KBM-7 (cell line): ENCODE measurements at regions of chr6 and their contacts with region 1.

Region 1: DNA sequence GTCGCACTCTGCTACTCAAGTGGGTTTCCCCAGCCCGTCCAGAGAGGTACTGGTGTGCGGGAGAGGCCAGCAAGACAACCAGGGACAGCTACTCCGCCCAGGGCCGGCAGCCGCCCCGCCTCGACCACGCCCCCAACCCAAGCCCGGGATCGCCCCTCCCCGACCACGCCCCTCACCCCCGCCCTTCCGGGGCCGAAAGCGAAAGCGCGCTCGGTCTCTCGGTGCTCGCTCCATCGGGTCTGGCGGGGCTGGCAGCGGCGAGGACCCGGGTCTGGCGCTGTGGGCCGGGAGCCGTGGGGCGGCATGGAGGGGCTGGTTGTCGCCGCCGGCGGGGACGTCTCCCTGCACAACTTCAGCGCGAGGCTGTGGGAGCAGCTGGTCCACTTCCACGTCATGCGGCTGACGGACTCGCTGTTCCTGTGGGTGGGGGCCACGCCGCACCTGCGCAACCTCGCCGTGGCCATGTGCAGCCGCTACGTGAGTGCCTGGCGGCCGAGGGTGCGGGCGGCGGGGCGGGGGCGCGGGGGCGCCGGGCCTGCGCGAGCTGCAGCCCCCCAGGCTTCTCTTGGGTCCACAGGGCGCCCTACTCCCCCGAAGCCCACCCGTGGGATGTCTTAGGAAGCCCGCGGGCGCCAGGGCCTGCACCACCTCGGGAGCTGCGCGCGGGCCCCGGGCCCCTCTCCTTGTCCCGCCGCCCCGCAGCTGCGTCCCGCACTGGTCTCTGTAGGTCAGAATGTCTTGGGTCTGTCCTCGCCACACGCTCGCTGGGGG is at the start of gene PSMG4:
- DNase-seq: peak; percentile 77

Region 2: DNA sequence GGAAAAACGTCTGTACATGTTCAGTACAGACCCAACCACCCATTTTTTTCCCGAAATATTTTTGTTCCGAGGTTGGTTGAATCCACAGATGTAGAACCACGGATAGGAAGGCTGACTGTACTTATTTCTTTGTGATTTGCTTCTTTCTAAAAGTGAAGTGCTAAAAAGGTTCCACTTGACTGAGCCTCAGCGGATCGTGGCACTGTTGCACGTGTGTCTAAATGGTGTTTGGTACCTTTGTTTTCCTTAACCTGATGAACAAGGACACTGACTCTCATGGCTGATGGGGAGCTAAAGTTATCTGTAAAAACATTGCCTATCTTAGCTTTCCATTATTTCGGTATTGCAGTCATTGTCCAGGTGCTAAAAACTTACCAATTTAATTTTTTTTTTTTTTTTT is 134.2 kb before region 1 on chr6:
- in situ Hi-C with region 1: loop called (anchors 10 kb)
- DNase-seq: no peak